ENCODE measurements at regions of chr17 and their contacts with region 1.

Region 1: DNA sequence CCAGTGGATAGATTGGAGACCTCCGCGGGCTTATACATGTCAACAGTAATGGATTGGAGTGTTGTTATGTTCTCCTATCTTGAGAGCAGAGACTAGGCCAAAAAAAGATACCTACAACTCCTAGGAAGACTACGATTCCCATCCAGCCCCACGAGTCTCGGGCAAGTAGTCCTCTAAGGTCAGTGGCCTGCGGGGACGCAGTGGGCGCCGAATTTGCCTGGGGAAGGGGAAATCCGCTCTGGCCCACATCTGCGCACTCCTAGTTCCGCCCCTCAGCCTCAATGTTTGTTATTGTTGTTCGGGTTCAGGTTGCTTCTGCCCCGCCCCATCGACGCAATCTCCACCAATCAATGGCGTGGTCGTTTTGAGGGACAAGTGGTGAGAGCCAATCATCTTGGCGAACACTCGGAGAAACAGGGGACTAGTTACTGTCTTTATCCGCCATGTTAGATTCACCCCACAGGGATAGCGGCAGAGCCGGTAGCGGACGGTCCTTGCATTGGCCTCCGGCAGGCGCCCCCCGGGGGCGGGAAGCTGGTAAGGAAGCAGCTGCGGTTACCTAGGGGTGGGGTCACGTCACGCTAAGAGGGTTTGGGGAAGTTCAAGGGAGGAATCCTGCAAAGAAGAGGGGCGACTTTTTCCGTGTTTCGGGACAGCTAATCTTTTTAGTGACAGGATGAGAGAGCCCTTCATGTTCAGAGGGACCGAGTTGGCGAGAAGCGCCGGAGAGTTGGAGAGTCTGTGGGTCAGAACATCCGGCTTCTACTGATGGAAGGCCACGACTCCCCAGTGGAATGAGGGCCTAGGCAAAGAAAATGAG is at the start of gene NBR1:
- DNase-seq: peak; percentile 96 to 97
- H3K4me3 ChIP-seq: peak within 1 kb of the TSS; percentile 21 to 96 (median 46)
- H3K27ac ChIP-seq: peak within 1 kb of the TSS; percentile 94 to 98 (median 95)
- H3K4me1 ChIP-seq: peaks cover 32 to 53% of the 10 kb centered on the region in 2 donors
- H3K27me3 ChIP-seq: no peaks in the 10 kb centered on the region
- CTCF ChIP-seq: peak in 2 of 6 experiments; percentile 23 to 30
- POLR2A ChIP-seq: peak in 1 of 2 donors; percentile 94
- total RNA-seq, gene NBR1: 117 to 166 (median 134) TPM

Region 2: DNA sequence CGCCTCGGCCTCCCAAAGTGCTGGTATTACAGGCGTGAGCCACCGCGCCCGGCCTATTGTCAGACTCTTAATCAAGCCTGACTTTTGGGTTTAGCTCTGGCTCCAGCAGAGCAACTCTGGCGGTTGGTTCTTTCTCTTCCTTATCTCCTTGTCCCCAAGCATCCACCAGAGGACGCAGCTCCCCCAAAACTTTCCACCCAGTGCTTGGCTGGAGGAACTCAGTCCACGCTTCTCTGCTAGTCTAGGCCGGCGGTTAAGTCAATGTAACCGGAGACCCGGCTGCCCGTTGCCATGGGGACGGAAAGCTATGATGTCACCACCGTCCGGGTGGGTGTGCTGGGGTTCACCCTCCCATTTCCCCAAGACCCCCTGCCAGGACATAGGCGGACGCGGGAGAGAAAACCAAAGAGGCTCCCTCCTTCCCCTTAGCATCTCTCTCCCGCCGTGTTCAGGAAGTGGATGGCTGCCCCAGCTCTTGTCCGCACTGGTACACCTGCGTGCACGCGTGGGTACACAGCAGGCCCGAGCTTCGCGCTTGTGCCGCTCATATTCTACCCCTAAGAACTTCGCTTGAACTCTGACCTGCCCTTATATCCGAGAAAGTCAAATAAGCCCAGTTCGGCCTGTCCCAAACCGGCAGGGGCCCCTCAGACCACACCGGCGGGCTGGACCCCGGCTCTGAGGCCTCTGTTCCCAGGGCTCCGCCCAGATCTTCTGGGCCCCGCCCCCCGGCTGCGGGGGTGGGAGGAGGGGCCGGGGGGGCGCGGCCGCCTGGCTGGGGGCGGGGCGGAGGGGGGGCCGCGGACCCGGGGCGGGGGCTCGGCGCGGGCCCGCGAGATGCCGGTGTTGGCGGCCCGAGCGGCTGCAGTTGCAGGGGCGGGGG is 146.3 kb before region 1 on chr17 and contains the start of gene RND2:
- intact Hi-C with region 1: loop called (anchors 5 kb)
- DNase-seq: peak; percentile 92 to 95
- H3K4me3 ChIP-seq: peak within 1 kb of the TSS; percentile 8 to 42 (median 30)
- H3K27ac ChIP-seq: peak within 1 kb of the TSS; percentile 52 to 80 (median 76)
- H3K4me1 ChIP-seq: peaks cover 8 to 34% of the 10 kb centered on the region in 2 donors
- H3K27me3 ChIP-seq: no peaks in the 10 kb centered on the region
- CTCF ChIP-seq: peak; percentile 54 to 97 (median 86)
- POLR2A ChIP-seq: peak in 1 of 2 donors; percentile 67
- total RNA-seq, gene RND2: 5.2 to 14.8 (median 10.3) TPM

Region 3: DNA sequence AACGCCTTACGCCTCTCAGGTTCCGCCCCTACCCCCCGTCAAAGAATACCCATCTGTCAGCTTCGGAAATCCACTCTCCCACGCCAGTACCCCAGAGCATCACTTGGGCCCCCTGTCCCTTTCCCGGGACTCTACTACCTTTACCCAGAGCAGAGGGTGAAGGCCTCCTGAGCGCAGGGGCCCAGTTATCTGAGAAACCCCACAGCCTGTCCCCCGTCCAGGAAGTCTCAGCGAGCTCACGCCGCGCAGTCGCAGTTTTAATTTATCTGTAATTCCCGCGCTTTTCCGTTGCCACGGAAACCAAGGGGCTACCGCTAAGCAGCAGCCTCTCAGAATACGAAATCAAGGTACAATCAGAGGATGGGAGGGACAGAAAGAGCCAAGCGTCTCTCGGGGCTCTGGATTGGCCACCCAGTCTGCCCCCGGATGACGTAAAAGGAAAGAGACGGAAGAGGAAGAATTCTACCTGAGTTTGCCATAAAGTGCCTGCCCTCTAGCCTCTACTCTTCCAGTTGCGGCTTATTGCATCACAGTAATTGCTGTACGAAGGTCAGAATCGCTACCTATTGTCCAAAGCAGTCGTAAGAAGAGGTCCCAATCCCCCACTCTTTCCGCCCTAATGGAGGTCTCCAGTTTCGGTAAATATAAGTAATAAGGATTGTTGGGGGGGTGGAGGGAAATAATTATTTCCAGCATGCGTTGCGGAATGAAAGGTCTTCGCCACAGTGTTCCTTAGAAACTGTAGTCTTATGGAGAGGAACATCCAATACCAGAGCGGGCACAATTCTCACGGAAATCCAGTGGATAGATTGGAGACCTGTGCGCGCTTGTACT is 45.6 kb before region 1 on chr17 and contains the start of gene BRCA1:
- intact Hi-C with region 1: loop called (anchors 5 kb)
- DNase-seq: peak; percentile 95
- H3K4me3 ChIP-seq: peak within 1 kb of the TSS; percentile 29 to 68 (median 59)
- H3K27ac ChIP-seq: peak within 1 kb of the TSS; percentile 32 to 73 (median 65)
- H3K4me1 ChIP-seq: peaks cover 13 to 18% of the 10 kb centered on the region in 2 donors
- H3K27me3 ChIP-seq: no peaks in the 10 kb centered on the region
- CTCF ChIP-seq: no peak
- POLR2A ChIP-seq: peak in 1 of 2 donors; percentile 60
- total RNA-seq, gene BRCA1: 14.4 to 31.9 (median 25.4) TPM

Region 4: DNA sequence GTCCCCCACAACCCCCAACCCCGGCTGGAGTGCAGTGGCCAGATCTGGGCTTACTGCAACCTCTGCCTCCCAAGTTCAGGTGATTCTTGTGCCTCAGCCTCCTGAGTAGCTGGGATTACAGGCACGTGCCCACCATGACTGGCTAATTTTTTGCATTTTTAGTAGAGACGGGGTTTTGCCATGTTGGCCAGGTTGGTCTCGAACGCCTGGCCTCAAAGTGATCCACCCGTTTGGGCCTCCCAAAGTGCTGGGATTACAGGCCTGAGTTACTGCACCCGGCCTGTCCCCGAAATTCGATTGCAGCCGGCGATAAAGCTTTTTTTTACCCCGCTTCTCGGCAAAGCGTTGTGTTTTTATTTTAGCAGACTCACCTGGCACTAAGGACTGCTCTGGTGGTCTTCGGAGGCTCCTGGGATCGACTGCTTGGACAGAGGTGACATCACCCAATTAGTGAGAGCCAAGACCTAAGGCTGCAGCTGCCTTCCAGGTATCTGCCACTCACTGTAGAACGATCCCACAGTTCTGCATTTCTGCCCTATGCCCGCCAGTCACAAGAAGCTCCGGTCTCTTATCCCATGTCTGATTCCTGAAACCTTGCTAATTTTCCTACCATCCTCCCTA is 145.7 kb after region 1 on chr17:
- intact Hi-C with region 1: loop called (anchors 10 kb)
- DNase-seq: peak in 1 of 2 donors; percentile 13
- H3K4me3 ChIP-seq: no peak overlapping the region
- H3K27ac ChIP-seq: no peak overlapping the region
- H3K4me1 ChIP-seq: no peaks in the 10 kb centered on the region
- H3K27me3 ChIP-seq: no peaks in the 10 kb centered on the region
- CTCF ChIP-seq: no peak
- POLR2A ChIP-seq: no peak